ENCODE measurements at regions of chr15 and their contacts with region 1.

Region 1: DNA sequence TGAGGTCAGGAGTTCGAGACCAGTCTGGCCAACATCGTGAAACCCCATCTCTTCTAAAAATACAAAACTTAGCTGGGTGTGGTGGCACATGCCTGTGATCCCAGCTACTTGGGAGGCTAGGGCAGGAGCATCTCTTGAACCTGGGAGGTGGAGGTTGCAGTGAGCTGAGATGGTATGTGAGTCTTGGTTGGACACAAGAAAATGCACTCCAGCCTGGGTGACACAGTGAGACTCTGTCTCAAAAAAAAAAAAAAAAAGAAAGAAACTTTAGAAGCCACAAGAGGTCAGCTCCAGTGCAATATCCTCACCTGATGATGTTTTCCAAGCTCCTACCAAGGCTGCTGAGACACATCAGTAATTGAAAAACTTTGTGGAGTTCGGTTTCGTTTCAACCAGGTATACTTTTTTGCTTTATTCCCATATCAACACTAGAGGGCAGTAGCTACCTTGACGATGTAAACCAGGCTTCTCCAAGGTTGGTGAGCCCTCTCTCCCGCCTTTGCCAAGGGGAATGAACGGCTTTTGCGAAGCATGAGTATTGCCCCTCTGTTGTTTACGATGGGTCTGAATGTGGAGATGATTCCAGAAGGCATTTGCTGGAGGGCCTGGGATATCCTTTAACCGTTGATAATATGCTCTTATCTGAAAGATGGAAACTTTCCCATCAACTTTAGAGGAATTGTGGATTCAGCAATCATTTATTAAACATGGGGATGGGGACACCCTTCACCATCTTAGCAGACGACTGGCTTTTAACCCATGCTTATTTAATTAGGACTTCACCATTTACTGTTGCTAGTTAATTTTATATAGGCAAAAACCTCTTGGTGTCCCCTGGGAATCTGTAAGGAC is 202.8 kb downstream of the SV2B start:
- DNase-seq: peak in 41 of 42 donors; percentile 6 to 79 (median 45)

Region 2: DNA sequence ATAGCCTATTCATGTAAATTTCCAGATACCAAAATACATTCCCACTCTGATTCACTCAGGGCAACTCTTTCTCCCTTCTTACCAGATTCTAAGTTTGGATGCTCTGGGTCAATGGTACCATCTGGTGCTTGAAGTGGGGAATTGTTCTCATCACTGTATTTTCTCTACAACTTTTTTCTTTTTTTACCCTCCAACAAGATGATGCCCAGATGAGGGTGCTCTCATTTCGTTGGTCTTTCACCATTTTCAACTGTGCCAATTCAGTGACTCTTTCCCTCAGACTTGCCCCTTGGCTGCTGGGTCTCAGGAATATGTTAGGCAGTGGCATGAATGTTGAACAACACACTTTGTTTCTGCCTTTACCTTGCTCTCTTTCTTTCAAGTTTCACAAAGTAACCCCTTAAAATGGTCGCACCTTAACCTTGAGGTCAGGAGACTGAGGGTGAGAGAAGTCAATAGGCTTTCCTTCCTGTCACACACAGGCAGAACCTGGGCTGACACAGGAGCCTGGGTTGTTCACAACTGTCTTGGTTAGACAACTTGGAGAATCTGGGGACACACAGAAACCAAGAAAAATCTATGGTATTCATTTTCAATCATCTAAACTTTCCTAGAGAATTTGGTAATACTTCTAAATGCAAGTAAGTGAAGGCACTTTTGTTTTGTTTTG is 220.0 kb after region 1 on chr15:
- intact Hi-C with region 1: loop called (anchors 2 kb)
- DNase-seq: peak in 29 of 42 donors; percentile 3 to 78 (median 38)